Mammary epithelial cell (primary cell): ENCODE measurements at regions of chr11 and their contacts with region 1.

Region 1: DNA sequence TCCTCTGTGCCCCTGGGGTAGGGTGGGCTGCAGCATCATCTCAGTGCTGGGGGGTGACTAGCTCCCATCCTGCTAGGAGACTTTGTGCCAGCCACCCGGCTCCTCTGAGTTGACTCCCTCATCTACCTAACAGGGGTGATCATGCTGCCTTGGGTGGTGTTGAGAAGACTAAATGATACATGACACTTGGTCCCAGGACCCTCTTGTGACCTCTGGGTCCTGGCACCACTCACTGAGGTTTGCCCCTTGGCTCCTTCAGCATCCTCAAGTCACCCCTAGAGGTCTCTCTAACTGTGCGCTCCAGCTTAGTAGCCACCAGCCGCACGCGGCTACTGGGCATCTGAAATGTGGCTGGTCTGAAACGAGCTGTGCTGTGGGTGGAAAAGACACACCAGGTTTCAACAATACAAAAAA is 72.1 kb downstream of the LRRC32 start:
- DNase-seq: no peak
- H3K4me3 ChIP-seq: no peak overlapping the region
- H3K27ac ChIP-seq: no peak overlapping the region
- H3K4me1 ChIP-seq: no peaks in the 10 kb centered on the region
- H3K27me3 ChIP-seq: no peaks in the 10 kb centered on the region
- CTCF ChIP-seq: peak in 1 of 2 donors; percentile 15

Region 2: GRCh38 chr11:76419896-76420295 is 178.5 kb before region 1 on chr11:
- CTCF ChIA-PET with region 1: no interaction called
- dilution Hi-C with region 1: no loop called
- in situ Hi-C with region 1: no loop called
- intact Hi-C with region 1: no loop called
- DNase-seq: no peak
- H3K4me3 ChIP-seq: no peak overlapping the region
- H3K27ac ChIP-seq: no peak overlapping the region
- H3K4me1 ChIP-seq: no peaks in the 10 kb centered on the region
- H3K27me3 ChIP-seq: no peaks in the 10 kb centered on the region
- CTCF ChIP-seq: peak; percentile 47 to 50

Region 3: GRCh38 chr11:76551400-76551799 is 47.0 kb before region 1 on chr11:
- CTCF ChIA-PET with region 1: no interaction called
- dilution Hi-C with region 1: no loop called
- in situ Hi-C with region 1: no loop called
- intact Hi-C with region 1: no loop called
- DNase-seq: no peak
- H3K4me3 ChIP-seq: no peak overlapping the region
- H3K27ac ChIP-seq: no peak overlapping the region
- H3K4me1 ChIP-seq: no peaks in the 10 kb centered on the region
- H3K27me3 ChIP-seq: no peaks in the 10 kb centered on the region
- CTCF ChIP-seq: peak in 1 of 2 donors; percentile 27

Region 4: DNA sequence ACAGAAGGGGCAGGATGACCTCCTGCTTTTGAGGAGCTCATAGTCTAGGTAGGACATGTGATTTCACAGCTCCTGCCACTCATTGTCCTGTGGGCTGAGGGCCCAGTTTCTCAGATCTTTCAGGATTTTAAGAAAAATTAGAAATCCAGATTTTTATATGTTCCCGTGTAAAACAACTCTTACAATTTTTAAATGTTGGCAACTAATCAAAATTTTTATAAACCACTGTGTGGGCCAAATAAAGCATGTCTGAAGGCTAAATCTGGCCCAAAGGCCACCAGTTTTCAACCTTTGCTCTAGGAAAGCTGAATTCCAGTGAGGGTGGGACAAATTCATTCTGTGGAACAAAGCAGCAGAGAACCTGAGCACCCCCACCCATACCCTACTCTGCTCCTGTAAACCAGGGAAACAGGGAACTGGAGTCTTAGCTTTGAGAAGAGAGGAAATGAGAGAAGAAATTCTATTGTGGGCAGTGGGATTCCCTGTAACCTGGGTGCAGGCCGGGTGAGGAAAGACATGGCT is 51.5 kb after region 1 on chr11:
- CTCF ChIA-PET with region 1: no interaction called
- dilution Hi-C with region 1: loop called (anchors 5 kb)
- in situ Hi-C with region 1: no loop called
- intact Hi-C with region 1: no loop called
- DNase-seq: no peak
- H3K4me3 ChIP-seq: no peak overlapping the region
- H3K27ac ChIP-seq: no peak overlapping the region
- H3K4me1 ChIP-seq: no peaks in the 10 kb centered on the region
- H3K27me3 ChIP-seq: peaks cover 6% of the 10 kb centered on the region
- CTCF ChIP-seq: no peak

Region 5: DNA sequence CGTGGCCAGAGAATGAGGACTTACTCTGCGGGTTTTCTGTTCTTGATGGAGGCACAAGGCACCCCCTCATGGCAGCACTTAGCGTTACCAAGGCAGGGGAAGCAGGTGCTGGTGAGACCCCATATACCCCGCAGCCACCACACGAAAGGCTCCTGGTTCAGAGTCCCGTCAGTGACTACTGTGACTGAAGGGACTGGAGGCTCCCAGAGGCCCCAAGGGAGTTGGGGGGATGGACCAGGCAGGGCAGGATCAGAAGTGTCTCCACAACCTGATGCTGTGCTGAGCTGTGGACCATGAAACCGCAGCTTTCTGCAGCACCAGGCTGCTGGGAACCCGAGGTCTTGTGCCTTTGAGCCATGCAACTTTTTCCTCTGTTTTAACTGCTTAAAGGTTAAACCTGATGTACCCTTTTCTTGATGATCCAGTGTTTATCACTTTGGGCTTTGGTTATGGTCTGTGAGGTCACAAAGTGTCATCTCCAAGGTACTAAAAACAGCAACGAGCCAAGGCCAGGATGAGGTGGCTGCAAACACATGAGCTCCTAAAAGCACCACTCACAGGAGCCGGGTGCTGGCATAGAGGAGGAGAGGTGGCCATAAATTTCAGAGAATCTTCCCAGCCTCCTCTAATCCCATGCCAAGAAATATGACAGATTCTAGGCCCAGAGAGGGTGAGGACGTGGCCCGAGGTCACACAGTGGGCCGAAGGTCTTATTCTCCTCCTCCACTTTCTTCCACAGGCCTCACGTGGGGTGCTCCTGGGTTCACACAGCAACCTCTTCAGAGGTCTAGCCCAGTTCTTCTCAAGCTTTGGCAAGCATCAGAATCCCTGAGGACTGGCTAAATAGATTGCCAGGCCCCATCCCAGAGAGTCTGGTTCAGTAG is 76.3 kb after region 1 on chr11:
- CTCF ChIA-PET with region 1: no interaction called
- dilution Hi-C with region 1: loop called (anchors 5 kb)
- in situ Hi-C with region 1: no loop called
- intact Hi-C with region 1: no loop called
- DNase-seq: no peak
- H3K4me3 ChIP-seq: no peak overlapping the region
- H3K27ac ChIP-seq: no peak overlapping the region
- H3K4me1 ChIP-seq: no peaks in the 10 kb centered on the region
- H3K27me3 ChIP-seq: peaks cover 2% of the 10 kb centered on the region
- CTCF ChIP-seq: no peak